Mammary epithelial cell (primary cell): ENCODE measurements at regions of chr19 and their contacts with region 1.

Region 1: DNA sequence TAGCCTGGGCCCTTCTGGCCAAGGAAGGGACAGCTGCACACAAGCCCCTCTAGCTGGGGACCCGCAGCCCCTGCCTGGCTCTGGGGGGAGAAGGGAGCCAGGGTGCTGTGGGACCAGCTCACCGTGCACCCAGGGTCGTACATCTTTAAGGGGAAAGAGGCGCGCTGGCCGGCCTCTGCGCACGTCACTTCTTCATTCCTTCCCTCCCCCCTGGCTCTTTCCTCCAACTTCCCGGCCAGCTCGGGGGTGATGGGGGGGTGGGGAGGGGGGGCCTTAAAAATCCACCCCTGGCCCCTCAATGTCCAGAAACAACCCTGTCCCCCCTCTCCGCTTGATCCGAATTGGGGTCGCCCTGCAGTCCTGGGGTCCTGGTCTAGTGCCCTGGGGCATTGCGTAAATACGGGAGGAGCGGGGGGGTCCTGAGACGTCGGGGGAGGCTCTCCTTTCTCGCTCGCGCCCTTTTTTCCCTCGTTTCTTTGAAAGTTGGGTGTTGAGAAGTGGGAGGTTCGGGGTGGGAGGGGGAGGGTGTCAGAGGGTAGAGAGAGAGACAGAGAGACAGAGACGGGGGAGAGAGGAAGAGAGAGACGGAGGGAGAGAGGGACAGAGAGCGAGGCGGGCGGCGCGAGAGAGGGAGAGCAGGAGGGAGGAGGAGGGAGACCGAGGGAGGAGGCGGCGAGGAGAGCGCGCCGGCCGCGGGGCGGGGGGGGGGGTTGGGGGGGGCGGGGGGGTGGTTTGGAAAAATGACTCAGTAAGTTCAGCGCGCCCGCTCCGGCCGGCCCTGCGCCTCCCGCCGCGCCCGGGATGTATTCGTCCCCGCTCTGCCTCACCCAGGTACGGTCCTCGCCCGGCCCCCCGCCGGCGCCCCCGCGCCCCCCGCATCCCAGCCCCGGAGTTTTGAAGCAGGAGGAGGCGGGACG is at the start of gene NFIC:
- DNase-seq: peak; percentile 69
- H3K4me3 ChIP-seq: peak within 1 kb of the TSS; percentile 84 to 87 (median 84)
- H3K27ac ChIP-seq: peak within 1 kb of the TSS; percentile 51
- H3K4me1 ChIP-seq: peaks cover 41% of the 10 kb centered on the region
- H3K27me3 ChIP-seq: no peaks in the 10 kb centered on the region
- CTCF ChIP-seq: no peak
- total RNA-seq, gene NFIC: 43.7 to 77.5 TPM

Region 2: GRCh38 chr19:3434712-3435553 is 68.8 kb after region 1 on chr19:
- CTCF ChIA-PET with region 1: interaction called, 7 read pairs
- dilution Hi-C with region 1: no loop called
- in situ Hi-C with region 1: no loop called
- intact Hi-C with region 1: loop called (anchors 2 kb)
- DNase-seq: peak; percentile 94
- H3K4me3 ChIP-seq: peak overlapping the region; percentile 24 to 51 (median 49)
- H3K27ac ChIP-seq: peak overlapping the region; percentile 59
- H3K4me1 ChIP-seq: peaks cover 11% of the 10 kb centered on the region
- H3K27me3 ChIP-seq: no peaks in the 10 kb centered on the region
- CTCF ChIP-seq: no peak